IMR-90 (cell line): ENCODE measurements at regions of chr18 and their contacts with region 1.

Region 1: GRCh38 chr18:49082714-49083688 is 132.2 kb upstream of the SMAD7 start:
- DNase-seq: no peak
- ATAC-seq: no peak
- H3K4me3 ChIP-seq: no peak overlapping the region
- H3K27ac ChIP-seq: no peak overlapping the region
- H3K4me1 ChIP-seq: no peaks in the 10 kb centered on the region
- H3K27me3 ChIP-seq: no peaks in the 10 kb centered on the region
- CTCF ChIP-seq: no peak
- POLR2A ChIP-seq: no peak
- RAD21 ChIP-seq: no peak

Region 2: DNA sequence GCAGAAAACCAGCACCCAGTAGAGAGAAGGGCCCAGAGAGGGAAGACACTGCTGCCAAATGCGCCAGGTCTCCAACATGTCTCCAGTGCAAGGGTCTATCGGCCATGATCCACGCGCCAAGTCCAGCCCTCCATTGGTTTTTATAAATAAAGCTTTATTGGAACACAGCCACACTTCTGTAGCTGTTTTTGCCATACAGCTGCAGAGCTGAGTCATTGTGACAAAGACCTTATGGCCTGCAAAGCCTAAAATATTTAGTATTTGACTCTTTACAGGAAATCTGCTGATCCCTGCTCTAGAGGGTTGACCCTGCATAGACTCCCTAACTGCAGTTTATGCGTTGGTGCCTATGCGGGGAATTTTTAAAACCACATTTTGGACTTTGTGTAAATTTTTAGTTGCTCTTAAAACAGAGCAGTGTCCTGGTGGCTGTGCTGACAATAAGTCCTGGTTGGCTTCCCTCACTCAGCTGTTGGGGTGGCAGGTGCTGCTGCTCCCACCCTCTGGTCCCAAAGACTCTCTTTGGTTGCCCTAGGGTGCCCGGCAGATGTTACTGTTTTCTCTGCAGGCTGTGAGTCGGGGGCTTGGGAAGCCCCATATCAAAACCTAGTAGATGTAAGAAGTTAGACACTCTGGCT is 389.3 kb before region 1 on chr18:
- CTCF ChIA-PET with region 1: no interaction called
- POLR2A ChIA-PET with region 1: interaction called, 14 read pairs
- dilution Hi-C with region 1: no loop called
- in situ Hi-C with region 1: no loop called
- intact Hi-C with region 1: no loop called
- DNase-seq: peak; percentile 68
- ATAC-seq: peak; percentile 74
- H3K4me3 ChIP-seq: no peak overlapping the region
- H3K27ac ChIP-seq: peak overlapping the region; percentile 37; the same call in 1 of the 2 replicates
- H3K4me1 ChIP-seq: peaks cover 8% of the 10 kb centered on the region
- H3K27me3 ChIP-seq: no peaks in the 10 kb centered on the region
- CTCF ChIP-seq: no peak
- POLR2A ChIP-seq: no peak
- RAD21 ChIP-seq: no peak